Dorsolateral prefrontal cortex (tissue), 120 donors: ENCODE measurements at regions of chr4 and their contacts with region 1.

Region 1: DNA sequence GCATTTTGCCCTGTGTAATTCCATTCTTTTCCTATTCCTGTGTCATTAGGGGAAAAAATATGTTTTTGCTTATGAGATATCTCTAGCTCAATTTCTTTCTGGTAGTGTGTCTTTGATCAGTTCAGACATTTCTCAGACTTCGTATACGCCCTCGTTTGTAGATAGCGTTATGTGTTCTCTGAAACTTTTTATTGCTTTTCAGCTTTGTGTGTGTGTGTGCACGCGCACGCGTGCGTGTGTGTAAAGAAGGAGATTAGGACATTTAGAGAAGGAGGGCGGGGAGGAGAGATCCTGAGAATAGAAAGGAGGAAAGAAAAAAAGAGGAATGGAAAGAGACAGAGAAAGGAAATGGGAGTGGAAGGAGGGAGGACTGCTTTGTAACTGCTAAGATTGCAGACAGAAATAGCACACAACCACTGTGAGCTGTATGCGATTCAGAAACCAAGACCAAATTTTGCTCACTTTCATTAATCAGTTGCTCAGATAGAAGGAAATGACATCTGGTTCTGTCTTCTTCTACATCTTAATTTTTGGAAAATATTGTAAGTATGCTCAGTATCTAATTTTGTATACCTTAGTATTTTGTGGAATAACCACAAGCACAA is at the start of gene RXFP1:
- DNase-seq: no peak
- H3K4me3 ChIP-seq: peak within 1 kb of the TSS in 47 of 59 donors; percentile 2 to 55 (median 32)
- H3K27ac ChIP-seq: peak within 1 kb of the TSS in 22 of 59 donors; percentile 0 to 55 (median 18)
- H3K27me3 ChIP-seq: peaks cover 0 to 7% (median 0%) of the 10 kb centered on the region in 45 donors
- CTCF ChIP-seq: no peak
- total RNA-seq, gene RXFP1: 4.2 to 39.2 (median 22.2) TPM

Region 2: GRCh38 chr4:157327666-157328065 is 1193.9 kb before region 1 on chr4:
- intact Hi-C with region 1: no loop called
- DNase-seq: no peak
- H3K4me3 ChIP-seq: no peak overlapping the region
- H3K27ac ChIP-seq: no peak overlapping the region
- H3K27me3 ChIP-seq: no peaks in the 10 kb centered on the region
- CTCF ChIP-seq: no peak

Region 3: GRCh38 chr4:158538176-158538575 is 16.6 kb after region 1 on chr4:
- intact Hi-C with region 1: loop called in 1 of 2 experiments (anchors 1 kb)
- DNase-seq: peak in 6 of 10 donors; percentile 17 to 73 (median 46)
- H3K4me3 ChIP-seq: no peak overlapping the region
- H3K27ac ChIP-seq: peak overlapping the region in 9 of 59 donors; percentile 36 to 69 (median 60)
- H3K27me3 ChIP-seq: peaks cover 0 to 3% (median 0%) of the 10 kb centered on the region in 45 donors
- CTCF ChIP-seq: no peak

Region 4: DNA sequence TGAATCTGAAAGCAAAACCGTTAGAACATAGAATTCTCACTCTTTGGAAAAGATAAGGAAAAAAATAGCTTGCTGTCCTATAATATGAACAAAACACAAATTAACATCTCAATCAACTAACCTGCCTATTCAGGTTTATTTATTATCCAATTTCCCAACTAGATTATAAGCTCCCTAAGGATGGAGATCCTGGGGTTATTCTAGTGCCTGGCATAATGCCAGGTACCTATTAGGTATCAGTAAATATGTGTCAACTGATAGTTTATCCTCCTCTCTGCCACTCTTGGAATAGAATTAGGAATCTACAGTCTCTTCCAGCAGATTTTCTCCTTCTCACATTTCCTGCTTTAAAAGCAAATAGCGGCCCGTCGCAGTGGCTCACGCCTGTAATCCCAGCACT is 170.2 kb after region 1 on chr4:
- intact Hi-C with region 1: no loop called
- DNase-seq: no peak
- H3K4me3 ChIP-seq: no peak overlapping the region
- H3K27ac ChIP-seq: no peak overlapping the region
- H3K27me3 ChIP-seq: no peaks in the 10 kb centered on the region
- CTCF ChIP-seq: no peak